Activated B cell treated with CpG ODN at 0.5 μM for 24 hours (primary cell): ENCODE measurements at regions of chr5 and their contacts with region 1.

Region 1: GRCh38 chr5:124034963-124035362 is 523.0 kb downstream of the CSNK1G3 start:
- DNase-seq: no peak
- ATAC-seq: peak; percentile 94
- H3K4me3 Mint-ChIP-seq: peak overlapping the region; percentile 48
- H3K27ac Mint-ChIP-seq: peak overlapping the region; percentile 92
- H3K4me1 Mint-ChIP-seq: peaks cover 52% of the 10 kb centered on the region
- H3K27me3 Mint-ChIP-seq: no peaks in the 10 kb centered on the region
- CTCF ChIP-seq: no peak

Region 2: DNA sequence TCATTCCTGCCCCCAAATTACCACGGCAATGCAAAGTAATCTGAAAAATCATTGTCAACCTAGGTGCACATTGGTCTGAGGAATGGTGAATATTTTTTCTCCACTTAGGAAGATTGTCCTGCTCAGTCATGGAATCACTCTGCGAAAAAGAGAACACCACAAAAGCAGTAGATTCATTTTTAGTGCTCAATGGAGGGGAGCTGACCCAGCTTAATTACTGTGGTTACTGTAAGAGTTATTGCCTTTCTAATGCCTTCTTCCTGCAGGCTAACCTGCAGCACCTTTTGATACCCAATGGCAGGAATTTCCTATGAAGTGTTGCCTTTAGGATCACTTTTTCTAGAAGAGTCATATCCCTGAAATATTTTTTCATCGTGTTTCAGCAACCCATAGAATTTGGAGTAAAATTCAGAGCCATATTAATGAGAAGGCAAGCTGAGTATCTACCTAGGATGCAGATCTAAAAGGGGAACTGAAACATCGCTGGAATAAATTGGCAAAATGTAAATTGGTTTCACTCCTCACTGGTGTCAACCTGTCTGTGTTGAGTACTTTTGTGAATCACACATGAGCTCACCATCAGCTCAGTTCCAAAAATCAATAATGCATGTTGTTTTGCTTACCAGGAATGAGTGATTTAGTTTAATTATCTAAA is 58.5 kb before region 1 on chr5:
- CTCF ChIA-PET with region 1: no interaction called
- POLR2A ChIA-PET with region 1: interaction called, 4 read pairs
- intact Hi-C with region 1: loop called (anchors 2 kb)
- DNase-seq: no peak
- ATAC-seq: peak; percentile 90
- H3K4me3 Mint-ChIP-seq: no peak overlapping the region
- H3K27ac Mint-ChIP-seq: no peak overlapping the region
- H3K4me1 Mint-ChIP-seq: peaks cover 30% of the 10 kb centered on the region
- H3K27me3 Mint-ChIP-seq: no peaks in the 10 kb centered on the region
- CTCF ChIP-seq: no peak

Region 3: GRCh38 chr5:124079062-124079461 is 44.1 kb after region 1 on chr5:
- CTCF ChIA-PET with region 1: no interaction called
- POLR2A ChIA-PET with region 1: no interaction called
- intact Hi-C with region 1: loop called (anchors 1 kb)
- DNase-seq: no peak
- ATAC-seq: no peak
- H3K4me3 Mint-ChIP-seq: no peak overlapping the region
- H3K27ac Mint-ChIP-seq: no peak overlapping the region
- H3K4me1 Mint-ChIP-seq: peaks cover 30% of the 10 kb centered on the region
- H3K27me3 Mint-ChIP-seq: no peaks in the 10 kb centered on the region
- CTCF ChIP-seq: no peak

Region 4: GRCh38 chr5:124157320-124157719 is 122.4 kb after region 1 on chr5:
- CTCF ChIA-PET with region 1: no interaction called
- POLR2A ChIA-PET with region 1: no interaction called
- intact Hi-C with region 1: loop called (anchors 5 kb)
- DNase-seq: no peak
- ATAC-seq: peak; percentile 61
- H3K4me3 Mint-ChIP-seq: peak overlapping the region; percentile 84
- H3K27ac Mint-ChIP-seq: peak overlapping the region; percentile 89
- H3K4me1 Mint-ChIP-seq: peaks cover 52% of the 10 kb centered on the region
- H3K27me3 Mint-ChIP-seq: no peaks in the 10 kb centered on the region
- CTCF ChIP-seq: no peak

Region 5: GRCh38 chr5:124453221-124454051 is 418.5 kb after region 1 on chr5:
- CTCF ChIA-PET with region 1: no interaction called
- POLR2A ChIA-PET with region 1: no interaction called
- intact Hi-C with region 1: loop called (anchors 5 kb)
- DNase-seq: peak; percentile 31
- ATAC-seq: peak; percentile 95
- H3K4me3 Mint-ChIP-seq: peak overlapping the region; percentile 67
- H3K27ac Mint-ChIP-seq: peak overlapping the region; percentile 79
- H3K4me1 Mint-ChIP-seq: peaks cover 43% of the 10 kb centered on the region
- H3K27me3 Mint-ChIP-seq: no peaks in the 10 kb centered on the region
- CTCF ChIP-seq: no peak

Region 6: DNA sequence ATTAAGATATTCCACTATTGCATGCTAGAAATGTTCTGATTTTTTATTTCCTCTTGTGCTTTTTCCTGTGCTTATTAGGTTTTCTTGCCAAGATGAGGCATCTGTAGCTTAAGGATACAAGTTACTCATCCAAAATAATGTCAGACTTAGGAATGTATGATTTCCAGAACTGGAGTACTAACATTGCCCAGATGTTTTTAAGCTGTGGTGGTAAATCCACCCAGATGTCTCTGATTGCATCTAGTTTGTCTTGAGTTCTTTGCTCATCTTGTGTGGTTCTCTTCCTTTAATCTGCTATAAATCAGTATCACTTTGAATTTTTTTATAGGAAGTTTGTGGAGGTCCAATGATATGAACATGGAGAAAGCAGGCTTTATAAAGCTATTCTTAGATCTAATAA is 1049.0 kb after region 1 on chr5:
- CTCF ChIA-PET with region 1: no interaction called
- POLR2A ChIA-PET with region 1: interaction called, 12 read pairs
- intact Hi-C with region 1: no loop called
- DNase-seq: no peak
- ATAC-seq: no peak
- H3K4me3 Mint-ChIP-seq: no peak overlapping the region
- H3K27ac Mint-ChIP-seq: no peak overlapping the region
- H3K4me1 Mint-ChIP-seq: no peaks in the 10 kb centered on the region
- H3K27me3 Mint-ChIP-seq: no peaks in the 10 kb centered on the region
- CTCF ChIP-seq: no peak